BJ (cell line): ENCODE measurements at regions of chr3 and their contacts with region 1.

Region 1: GRCh38 chr3:69865920-69866679 is 126.8 kb downstream of the MITF start:
- DNase-seq: no peak
- H3K4me3 ChIP-seq: no peak overlapping the region
- H3K27me3 ChIP-seq: no peaks in the 10 kb centered on the region
- CTCF ChIP-seq: no peak

Region 2: GRCh38 chr3:69784954-69785514 is 81.1 kb before region 1 on chr3:
- CTCF ChIA-PET with region 1: no interaction called
- POLR2A ChIA-PET with region 1: interaction called, 10 read pairs
- DNase-seq: no peak
- H3K4me3 ChIP-seq: no peak overlapping the region
- H3K27me3 ChIP-seq: no peaks in the 10 kb centered on the region
- CTCF ChIP-seq: no peak